Mucosa of descending colon (tissue), 3 donors: ENCODE measurements at regions of chr16 and their contacts with region 1.

Region 1: DNA sequence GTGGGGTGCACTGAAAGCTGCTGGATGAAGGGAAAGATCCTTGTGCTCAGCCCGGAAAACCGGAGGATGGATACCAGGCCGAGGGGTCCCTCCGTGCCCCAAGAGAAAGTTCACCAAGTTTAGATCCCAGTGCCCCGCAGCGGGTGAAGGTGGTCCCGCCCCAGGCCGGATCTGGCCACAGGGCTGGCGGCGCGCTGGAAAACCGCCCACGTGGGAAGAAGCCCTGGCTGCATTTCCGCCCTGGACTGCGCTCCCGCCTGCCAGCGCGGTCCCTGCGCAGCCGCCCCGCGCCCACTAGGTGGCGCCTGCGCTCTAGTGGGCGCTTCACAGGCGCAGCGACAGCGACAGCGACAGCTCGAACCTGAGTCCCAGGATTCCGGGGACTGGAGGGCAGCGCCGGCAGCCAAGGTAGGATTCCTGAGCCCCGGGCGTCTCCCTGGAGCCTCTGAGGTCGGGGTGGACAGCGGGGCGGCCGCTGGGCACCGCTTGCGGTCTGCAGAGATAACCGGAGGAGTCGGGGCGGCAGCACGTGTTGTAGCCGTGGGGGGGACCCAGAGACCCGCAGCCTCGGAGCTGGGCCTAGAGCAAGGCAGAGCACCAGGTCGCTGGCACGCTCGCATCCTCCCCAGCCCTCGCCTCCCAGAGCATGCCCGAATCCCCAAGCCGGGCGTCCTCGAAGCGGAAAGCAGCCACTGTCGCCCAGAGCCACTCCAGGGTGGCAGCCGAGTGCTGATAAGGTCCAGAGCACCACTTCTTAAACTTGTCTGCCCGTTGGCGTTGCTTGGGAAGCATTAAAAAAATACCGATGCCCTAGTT is at the start of gene CHD9:
- DNase-seq: peak; percentile 89 to 93 (median 91)
- ATAC-seq: peak; percentile 90
- H3K4me3 ChIP-seq: peak within 1 kb of the TSS; percentile 67
- H3K4me1 ChIP-seq: peaks cover 26% of the 10 kb centered on the region
- CTCF ChIP-seq: peak; percentile 100
- total RNA-seq, gene CHD9: 65.4 to 95.9 (median 86.6) TPM

Region 2: GRCh38 chr16:53099318-53100130 is 44.6 kb after region 1 on chr16:
- intact Hi-C with region 1: loop called in 1 of 2 experiments (anchors 5 kb)
- DNase-seq: peak; percentile 92 to 95 (median 93)
- ATAC-seq: peak; percentile 93
- H3K4me3 ChIP-seq: no peak overlapping the region
- H3K4me1 ChIP-seq: peaks cover 37% of the 10 kb centered on the region
- CTCF ChIP-seq: no peak

Region 3: GRCh38 chr16:53130159-53131049 is 75.5 kb after region 1 on chr16:
- intact Hi-C with region 1: loop called (anchors 10 kb)
- DNase-seq: peak; percentile 95 to 98 (median 97)
- ATAC-seq: peak; percentile 88
- H3K4me3 ChIP-seq: peak overlapping the region; percentile 76
- H3K4me1 ChIP-seq: peaks cover 17% of the 10 kb centered on the region
- CTCF ChIP-seq: peak; percentile 73

Region 4: DNA sequence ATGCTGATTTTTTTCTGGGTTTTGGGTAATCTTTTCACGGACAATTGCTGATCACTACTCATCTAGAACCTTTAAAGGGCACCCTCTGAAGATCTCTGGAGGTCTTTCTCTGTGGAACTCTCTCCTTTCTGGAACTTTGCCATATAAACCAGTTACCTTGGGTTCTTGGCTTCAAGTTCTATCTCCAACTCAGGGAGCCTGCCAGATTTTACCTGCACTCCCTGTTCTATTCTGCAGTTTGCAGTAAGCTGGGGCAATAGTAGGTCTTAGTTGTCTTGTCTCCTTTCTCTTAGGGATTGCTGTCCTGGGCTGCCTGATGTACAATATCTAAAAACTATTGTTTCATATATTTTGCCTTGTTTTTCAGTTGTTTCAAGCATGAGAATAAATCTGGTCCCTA is 120.2 kb after region 1 on chr16:
- intact Hi-C with region 1: no loop called
- DNase-seq: no peak
- ATAC-seq: no peak
- H3K4me3 ChIP-seq: no peak overlapping the region
- H3K4me1 ChIP-seq: no peaks in the 10 kb centered on the region
- CTCF ChIP-seq: no peak

Region 5: GRCh38 chr16:53207810-53208752 is 153.2 kb after region 1 on chr16:
- intact Hi-C with region 1: loop called in 1 of 2 experiments (anchors 10 kb)
- DNase-seq: peak in 1 of 3 donors; percentile 68
- ATAC-seq: peak; percentile 95
- H3K4me3 ChIP-seq: no peak overlapping the region
- H3K4me1 ChIP-seq: peaks cover 4% of the 10 kb centered on the region
- CTCF ChIP-seq: no peak

Region 6: DNA sequence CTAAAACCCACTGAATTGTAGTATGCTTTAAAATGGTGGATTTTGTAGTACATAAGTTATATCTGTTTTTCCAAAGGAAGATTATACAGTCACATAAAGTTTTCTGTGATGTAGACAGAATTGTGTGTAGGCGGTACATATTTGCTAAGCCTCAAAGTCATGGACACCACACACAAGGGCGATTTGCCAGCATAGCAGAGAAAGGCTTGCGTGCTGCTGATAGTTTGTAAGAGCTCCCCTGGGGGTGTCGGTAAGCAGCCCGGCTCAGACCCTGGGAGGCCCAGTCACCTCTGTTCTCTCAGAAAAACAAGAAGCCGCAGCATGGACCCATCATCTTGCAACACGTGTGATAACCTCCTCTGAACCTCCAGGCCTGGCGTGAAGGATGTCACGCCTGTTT is 486.4 kb after region 1 on chr16:
- intact Hi-C with region 1: no loop called
- DNase-seq: no peak
- ATAC-seq: no peak
- H3K4me3 ChIP-seq: no peak overlapping the region
- H3K4me1 ChIP-seq: no peaks in the 10 kb centered on the region
- CTCF ChIP-seq: no peak